ENCODE measurements at regions of chr10 and their contacts with region 1.

Region 1: DNA sequence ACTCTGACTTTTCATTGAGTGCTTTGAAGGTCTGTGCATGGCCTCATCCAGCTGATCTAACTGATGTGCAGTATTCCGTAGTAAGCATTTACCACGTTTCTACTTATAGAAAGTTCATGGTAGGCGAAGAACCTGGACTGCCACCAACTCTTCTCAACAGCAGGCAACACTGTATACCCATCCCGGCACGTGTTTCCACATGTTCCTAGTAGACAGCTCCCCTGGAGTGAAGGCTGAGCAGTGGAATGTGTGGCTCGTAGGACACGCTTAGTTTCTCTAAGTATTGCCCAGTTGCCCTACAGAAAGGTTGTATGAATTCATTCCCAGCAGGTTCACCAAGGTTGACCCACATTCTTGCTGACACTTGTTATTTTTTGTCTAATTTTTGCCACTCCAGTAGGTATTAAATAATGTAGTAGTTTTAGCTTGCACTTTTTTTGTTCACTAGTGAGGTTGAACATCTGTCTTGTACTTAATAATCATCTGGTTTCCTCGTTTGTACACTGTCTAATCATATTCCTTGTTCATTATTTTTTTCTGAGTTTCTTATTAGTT is 15.2 kb downstream of the PROSER2 start:
- DNase-seq: no peak
- H3K4me3 Mint-ChIP-seq: no peak overlapping the region
- H3K27ac Mint-ChIP-seq: no peak overlapping the region
- H3K4me1 Mint-ChIP-seq: peaks cover 8% of the 10 kb centered on the region
- H3K27me3 Mint-ChIP-seq: no peaks in the 10 kb centered on the region
- CTCF ChIP-seq: no peak

Region 2: DNA sequence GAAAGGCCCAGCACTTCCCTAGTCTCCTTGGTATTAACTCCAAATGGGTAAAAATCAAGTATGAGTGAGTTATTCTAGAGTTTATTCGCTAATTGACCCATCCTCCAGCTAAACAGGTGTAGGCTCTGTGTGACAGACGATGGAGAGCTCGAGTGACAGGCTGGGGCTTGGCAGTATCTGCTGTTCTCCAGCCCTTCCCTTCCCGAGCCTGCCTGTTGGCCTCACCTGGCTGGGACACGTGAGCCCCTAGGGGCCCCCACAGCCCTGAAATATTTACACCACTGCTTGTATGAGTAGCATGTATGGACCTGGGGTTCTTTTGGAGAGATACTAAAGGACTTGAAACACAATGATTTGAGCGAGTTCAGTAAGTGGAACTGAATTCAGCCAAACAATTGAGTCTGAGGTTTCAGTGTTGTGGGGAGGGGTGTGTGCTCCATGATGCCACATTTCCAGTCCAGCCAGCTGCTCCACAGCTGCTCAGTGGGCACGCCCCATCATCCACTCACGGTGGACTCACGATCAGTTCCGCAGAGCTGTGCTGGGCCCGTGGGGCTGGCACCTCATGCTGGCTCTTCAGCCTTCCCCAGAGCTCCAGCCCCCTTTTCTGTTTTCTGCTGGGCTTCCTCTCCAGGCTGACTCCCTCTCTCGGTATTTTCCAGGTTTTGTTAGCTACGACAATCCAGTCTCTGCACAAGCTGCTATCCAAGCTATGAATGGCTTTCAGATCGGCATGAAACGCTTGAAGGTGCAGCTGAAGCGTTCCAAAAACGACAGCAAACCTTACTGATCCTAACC is 509.9 kb before region 1 on chr10:
- CTCF ChIA-PET with region 1: no interaction called
- intact Hi-C with region 1: no loop called
- DNase-seq: no peak
- H3K4me3 Mint-ChIP-seq: no peak overlapping the region
- H3K27ac Mint-ChIP-seq: no peak overlapping the region
- H3K4me1 Mint-ChIP-seq: no peaks in the 10 kb centered on the region
- H3K27me3 Mint-ChIP-seq: peaks cover 76% of the 10 kb centered on the region
- CTCF ChIP-seq: no peak

Region 3: GRCh38 chr10:11853468-11853867 is 15.1 kb after region 1 on chr10:
- CTCF ChIA-PET with region 1: no interaction called
- intact Hi-C with region 1: no loop called
- DNase-seq: no peak
- H3K4me3 Mint-ChIP-seq: no peak overlapping the region
- H3K27ac Mint-ChIP-seq: no peak overlapping the region
- H3K4me1 Mint-ChIP-seq: no peaks in the 10 kb centered on the region
- H3K27me3 Mint-ChIP-seq: no peaks in the 10 kb centered on the region
- CTCF ChIP-seq: no peak

Region 4: DNA sequence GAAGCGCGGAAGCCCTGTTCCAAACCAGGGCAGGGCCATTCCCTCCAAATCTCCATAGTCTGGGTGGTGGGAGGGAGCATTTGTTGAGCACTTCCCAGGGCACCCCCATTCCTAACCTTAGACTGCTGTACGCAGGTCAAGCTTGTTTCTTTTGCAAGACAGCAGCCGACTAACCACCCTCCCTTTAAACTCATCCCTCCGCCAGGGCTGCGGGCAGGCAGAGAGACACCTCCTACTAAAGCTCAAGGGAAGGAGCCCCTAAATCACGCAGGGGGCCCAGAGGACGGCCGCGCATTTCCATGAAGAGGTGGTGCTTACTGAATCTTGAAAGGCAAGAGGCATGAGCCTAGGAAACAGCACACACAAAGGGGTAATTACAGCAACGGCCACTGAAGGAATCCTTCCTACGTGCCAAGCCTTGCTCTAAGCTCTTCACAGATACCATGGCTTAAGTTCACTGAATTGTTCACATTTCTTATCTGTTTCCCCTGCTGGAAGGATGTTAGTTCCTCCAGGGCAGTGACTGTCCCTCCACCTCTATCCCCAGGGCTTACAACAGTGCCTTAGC is 74.8 kb after region 1 on chr10:
- CTCF ChIA-PET with region 1: interaction called, 11 read pairs
- intact Hi-C with region 1: no loop called
- DNase-seq: no peak
- H3K4me3 Mint-ChIP-seq: no peak overlapping the region
- H3K27ac Mint-ChIP-seq: no peak overlapping the region
- H3K4me1 Mint-ChIP-seq: no peaks in the 10 kb centered on the region
- H3K27me3 Mint-ChIP-seq: no peaks in the 10 kb centered on the region
- CTCF ChIP-seq: no peak